ENCODE measurements at regions of chr10 and their contacts with region 1.

Region 1: DNA sequence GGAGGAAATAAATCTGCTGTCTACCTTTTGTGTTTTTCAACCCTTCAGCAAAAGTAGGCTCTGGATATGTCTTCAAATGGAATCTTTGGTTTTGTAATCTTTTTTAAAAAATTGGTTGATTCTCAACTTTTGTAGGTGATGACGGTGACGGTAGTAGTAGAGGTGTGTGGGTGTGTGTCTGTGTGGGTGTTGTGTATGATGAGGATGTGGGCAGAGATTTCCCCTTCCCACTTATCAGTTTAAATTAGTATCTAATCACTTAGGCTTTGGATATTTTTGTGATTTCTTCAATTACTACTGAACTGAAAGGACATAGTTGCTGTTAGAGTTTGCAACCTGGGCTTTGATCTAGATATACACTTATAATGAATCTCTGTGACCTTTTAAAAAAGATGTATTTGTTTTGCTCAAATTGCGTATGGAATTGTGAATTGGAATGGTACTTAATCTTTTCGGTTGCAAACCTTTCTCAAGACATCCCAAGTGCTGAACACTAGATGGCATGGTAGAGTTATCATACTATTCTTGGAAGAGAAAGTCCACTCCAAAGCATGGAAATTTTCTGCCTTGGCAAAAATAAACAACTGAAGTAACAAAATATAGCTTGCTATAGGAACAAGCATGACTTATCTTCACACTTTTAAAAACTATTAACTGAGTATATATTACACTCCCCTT is 51.9 kb upstream of the A1CF start:
- DNase-seq: no peak
- ATAC-seq: peak; percentile 39

Region 2: DNA sequence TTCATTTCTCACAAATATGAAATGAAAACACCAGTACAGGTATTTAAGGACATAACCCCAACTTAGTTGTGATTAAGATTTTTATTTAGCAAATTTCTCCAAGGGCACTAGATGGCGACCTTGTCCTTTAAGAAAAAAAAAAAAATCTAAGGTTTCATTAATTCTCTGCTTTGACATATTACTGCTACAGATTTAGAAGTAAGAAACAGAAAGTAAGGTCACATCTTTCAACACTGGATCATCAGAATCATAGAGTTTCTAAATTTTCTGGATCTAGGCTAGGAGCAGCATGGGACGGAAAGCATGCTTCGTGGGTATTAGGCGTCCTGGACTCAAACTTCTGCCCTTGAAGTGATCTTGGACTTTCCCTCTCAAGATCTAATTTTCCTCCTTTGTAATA is 51.4 kb after region 1 on chr10:
- intact Hi-C with region 1: loop called (anchors 5 kb)
- DNase-seq: no peak
- ATAC-seq: no peak

Region 3: GRCh38 chr10:52232561-52233350 is 1295.4 kb after region 1 on chr10:
- intact Hi-C with region 1: no loop called
- DNase-seq: no peak
- ATAC-seq: peak; percentile 50

Measured in Right ventricle myocardium inferior (tissue), 1 donor.